ENCODE measurements at regions of chr10 and their contacts with region 1.

Region 1: DNA sequence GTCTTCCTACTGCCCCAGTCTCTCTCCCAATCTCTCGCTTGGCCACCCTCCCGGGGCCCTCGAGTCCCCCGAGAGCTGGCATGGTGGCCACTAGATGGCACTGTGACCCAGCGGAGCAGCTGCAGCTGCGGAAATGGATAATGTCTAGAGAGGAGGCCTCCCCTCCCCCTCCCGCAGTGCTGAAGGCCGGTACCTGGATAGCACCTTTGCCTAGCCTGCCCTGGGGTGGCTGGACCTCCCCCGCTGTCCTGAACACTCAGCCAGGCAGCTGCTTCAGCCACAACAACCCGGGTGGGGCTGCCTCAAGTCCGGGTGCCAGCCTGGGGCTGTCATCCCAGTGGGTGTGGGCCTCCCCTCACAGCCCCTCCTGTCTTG is 65.2 kb downstream of the GOLGA7B start:
- ATAC-seq: peak; percentile 82 to 99 (median 90)
- H3K4me3 ChIP-seq: no peak overlapping the region
- H3K27ac ChIP-seq: no peak overlapping the region
- H3K4me1 ChIP-seq: peaks cover 21 to 24% of the 10 kb centered on the region in 2 donors

Region 2: GRCh38 chr10:98030031-98030821 is 115.4 kb after region 1 on chr10 and contains the start of gene CRTAC1:
- in situ Hi-C with region 1: loop called in 3 of 9 experiments (anchors 10 to 25 kb)
- ATAC-seq: peak; percentile 81 to 88 (median 82)
- H3K4me3 ChIP-seq: peak within 1 kb of the TSS; percentile 44 to 73 (median 59)
- H3K27ac ChIP-seq: peak within 1 kb of the TSS; percentile 80 to 90
- H3K4me1 ChIP-seq: peaks cover 16 to 20% of the 10 kb centered on the region in 2 donors
- total RNA-seq, gene CRTAC1: 0.17 to 11.5 (median 5.3) TPM in 7 of 8 experiments, not detected in the other

Region 3: GRCh38 chr10:98045785-98046389 is 131.1 kb after region 1 on chr10:
- in situ Hi-C with region 1: loop called in 4 of 9 experiments (anchors 10 to 25 kb)
- ATAC-seq: peak; percentile 66 to 79 (median 77)
- H3K4me3 ChIP-seq: no peak overlapping the region
- H3K27ac ChIP-seq: no peak overlapping the region
- H3K4me1 ChIP-seq: peaks cover 7% of the 10 kb centered on the region in 2 donors